Caco-2 (cell line): ENCODE measurements at regions of chr1 and their contacts with region 1.

Region 1: DNA sequence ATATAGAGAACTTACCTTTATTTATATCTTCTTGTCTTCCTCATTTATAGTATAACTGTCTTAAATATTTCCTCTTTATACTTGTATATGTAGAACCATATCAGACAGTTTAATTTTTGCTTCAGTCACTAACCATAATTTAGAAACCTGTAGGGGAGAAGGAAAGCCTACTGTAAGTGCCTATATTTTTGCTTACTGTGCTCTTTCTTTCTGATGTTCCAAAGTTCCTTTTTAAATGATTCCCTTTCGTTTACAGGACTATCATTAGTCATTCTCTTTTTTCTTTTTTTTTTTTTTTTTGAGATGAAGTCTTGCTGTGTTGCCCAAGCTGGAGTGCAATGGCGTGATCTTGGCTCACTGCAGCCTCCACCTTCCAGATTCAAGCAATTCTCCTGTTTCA is 109.7 kb downstream of the CENPF start:
- DNase-seq: no peak
- H3K4me3 ChIP-seq: no peak overlapping the region
- H3K4me3 Mint-ChIP-seq: no peak overlapping the region
- H3K27ac Mint-ChIP-seq: no peak overlapping the region
- H3K4me1 ChIP-seq: no peaks in the 10 kb centered on the region
- H3K4me1 Mint-ChIP-seq: no peaks in the 10 kb centered on the region
- H3K27me3 ChIP-seq: no peaks in the 10 kb centered on the region
- H3K27me3 Mint-ChIP-seq: no peaks in the 10 kb centered on the region
- CTCF ChIP-seq: no peak

Region 2: GRCh38 chr1:214678378-214678777 is 34.4 kb before region 1 on chr1:
- CTCF ChIA-PET with region 1: no interaction called
- POLR2A ChIA-PET with region 1: no interaction called
- intact Hi-C with region 1: loop called (anchors 1 kb)
- DNase-seq: peak; percentile 75 to 86
- H3K4me3 ChIP-seq: no peak overlapping the region
- H3K4me3 Mint-ChIP-seq: no peak overlapping the region
- H3K27ac Mint-ChIP-seq: peak overlapping the region; percentile 82
- H3K4me1 ChIP-seq: peaks cover 26% of the 10 kb centered on the region
- H3K4me1 Mint-ChIP-seq: peaks cover 23% of the 10 kb centered on the region
- H3K27me3 ChIP-seq: no peaks in the 10 kb centered on the region
- H3K27me3 Mint-ChIP-seq: no peaks in the 10 kb centered on the region
- CTCF ChIP-seq: no peak